ENCODE measurements at regions of chr3 and their contacts with region 1.

Region 1: DNA sequence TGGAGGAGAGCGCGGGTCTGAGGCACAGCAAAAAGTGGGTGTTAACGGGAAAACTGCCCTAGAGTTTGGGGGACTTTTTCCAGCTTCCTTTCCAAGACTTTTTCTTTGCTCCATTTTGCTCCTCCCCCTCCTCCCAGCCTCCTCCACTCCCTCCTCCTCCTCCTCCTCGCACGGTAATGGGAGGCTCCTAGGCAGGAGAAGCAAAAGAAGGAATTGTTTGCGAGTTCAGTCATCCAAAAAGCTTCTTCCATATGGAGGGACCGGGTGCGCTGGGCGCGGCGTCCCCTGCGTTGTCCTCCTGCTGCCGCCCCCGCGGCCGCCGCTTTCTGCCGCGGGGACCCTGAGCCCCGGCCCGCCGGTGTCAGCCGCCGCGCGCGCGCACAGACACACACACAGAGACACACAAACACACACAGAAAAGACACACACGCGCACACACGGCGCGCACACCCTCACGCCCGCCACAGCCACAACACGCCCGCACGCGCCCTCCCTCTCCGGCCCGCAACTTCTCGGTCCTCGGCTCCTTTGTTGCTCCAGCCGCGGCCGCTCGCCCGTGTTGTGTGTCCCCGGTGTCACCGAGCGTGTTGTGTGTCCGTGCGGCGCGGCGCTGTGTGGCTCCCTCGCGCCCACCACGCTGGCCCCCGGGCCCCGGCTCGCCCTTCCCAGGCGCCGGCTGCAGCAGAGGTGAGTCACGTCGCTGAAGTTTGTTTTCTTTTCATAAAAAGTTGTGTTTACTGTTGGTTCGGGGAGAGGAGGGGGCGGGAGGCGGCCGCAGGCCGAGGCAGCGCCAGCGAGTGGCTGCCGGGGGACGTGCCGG is at the start of gene BOC:
- DNase-seq: peak; percentile 84

Region 2: DNA sequence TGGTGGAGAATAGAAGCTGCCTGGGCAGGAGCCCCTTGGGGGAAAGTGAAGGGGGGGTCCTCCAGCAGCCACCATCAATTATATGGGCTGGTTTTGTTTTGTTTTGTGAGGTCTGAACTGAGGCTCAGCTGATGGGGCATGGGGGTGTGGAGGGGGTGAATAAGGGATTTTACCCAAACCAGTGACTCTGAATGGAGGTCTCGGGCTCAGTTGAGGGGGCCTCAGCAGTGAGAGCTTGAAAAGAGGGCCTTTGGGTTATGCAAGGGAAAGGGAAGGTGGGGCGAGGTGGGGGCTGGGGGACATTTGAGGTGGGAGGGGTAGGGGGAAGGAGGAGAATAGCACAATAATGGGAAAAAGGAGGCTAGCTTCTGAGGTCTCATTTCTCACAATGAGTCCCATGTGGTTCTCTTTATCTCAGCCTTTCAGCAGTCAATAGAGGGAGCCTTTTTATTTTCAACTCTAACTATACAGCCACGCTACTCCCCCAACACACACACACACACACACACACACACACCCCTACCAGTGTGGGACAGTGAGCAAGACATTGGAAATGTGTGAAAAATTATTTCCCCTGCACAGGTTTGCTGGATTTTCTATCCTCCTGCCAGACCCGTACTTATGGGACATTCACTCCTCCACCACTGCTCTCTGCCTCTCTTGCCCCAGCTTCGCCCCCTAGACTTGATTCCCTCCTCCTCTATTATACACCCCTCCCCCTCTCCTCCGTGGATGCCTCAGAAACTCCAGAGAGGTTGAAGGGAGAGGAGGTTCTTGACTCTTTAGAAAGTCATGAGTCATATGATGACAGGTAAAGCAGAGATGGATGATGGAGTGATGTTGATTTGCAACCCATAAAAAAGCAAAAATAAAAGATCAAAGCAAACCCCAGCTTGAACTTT is 124.7 kb before region 1 on chr3:
- CTCF ChIA-PET with region 1: no interaction called
- POLR2A ChIA-PET with region 1: interaction called, 12 read pairs
- DNase-seq: no peak

Region 3: DNA sequence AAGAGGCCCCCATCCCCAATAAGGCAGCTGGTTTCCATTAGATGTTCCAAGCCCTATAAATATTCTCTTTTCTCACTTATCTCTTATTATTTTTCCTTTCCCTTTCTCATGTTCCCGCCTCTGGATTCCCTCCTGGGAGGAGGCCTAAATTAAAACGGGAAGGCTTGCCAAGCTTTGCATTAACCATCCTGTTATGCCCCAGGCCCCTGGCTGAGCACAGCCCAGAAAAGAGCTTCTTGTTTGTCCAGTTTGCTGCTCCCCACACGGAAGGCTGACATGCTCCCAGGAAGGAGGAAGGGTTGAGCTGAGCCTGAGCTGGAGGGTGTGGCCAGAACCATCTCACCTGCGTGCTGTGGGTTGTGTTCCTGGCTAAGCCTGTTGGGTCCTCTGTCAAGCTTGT is 63.3 kb before region 1 on chr3:
- CTCF ChIA-PET with region 1: no interaction called
- POLR2A ChIA-PET with region 1: interaction called, 10 read pairs
- DNase-seq: no peak

Region 4: GRCh38 chr3:113183748-113184661 is 27.5 kb before region 1 on chr3:
- CTCF ChIA-PET with region 1: no interaction called
- POLR2A ChIA-PET with region 1: no interaction called
- DNase-seq: no peak

Region 5: DNA sequence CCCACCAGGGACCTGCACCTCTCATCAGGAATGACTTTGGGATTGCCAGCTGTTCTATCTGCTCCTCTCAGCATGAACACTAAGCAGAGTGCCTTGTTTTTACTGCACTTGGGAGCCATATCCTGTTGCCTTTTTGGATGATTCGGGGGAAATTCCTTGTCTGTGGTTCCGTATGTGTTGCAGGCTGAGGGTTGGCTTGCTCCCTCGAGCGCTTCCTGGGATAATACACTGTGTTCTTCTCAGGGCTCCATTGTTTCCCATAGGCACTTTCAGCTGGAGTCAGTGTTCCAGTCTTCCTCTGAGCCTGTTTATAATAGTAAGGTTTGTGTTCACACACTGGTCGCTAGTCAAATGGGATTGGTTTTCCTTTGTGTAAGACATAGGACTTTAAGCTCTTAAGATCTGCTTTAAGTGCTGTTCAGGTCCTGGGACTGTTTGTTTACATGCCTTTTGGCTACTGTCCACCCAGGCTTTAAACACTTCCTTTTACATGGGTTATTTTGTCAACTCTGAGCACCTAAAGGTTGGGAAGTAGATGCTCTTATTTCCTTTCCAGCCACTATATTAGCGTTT is 23.2 kb after region 1 on chr3:
- CTCF ChIA-PET with region 1: no interaction called
- POLR2A ChIA-PET with region 1: interaction called, 11 read pairs
- DNase-seq: no peak

Measured in HEK293T (cell line).